Tibial artery (tissue), 4 donors: ENCODE measurements at regions of chr13 and their contacts with region 1.

Region 1: GRCh38 chr13:50911937-50912795 is 2.6 kb downstream of the RNASEH2B start:
- DNase-seq: peak; percentile 85 to 87
- H3K4me3 ChIP-seq: no peak overlapping the region
- H3K27ac ChIP-seq: no peak overlapping the region
- H3K4me1 ChIP-seq: peaks cover 0 to 31% (median 16%) of the 10 kb centered on the region in 4 donors
- H3K27me3 ChIP-seq: no peaks in the 10 kb centered on the region
- CTCF ChIP-seq: peak; percentile 66 to 71

Region 2: DNA sequence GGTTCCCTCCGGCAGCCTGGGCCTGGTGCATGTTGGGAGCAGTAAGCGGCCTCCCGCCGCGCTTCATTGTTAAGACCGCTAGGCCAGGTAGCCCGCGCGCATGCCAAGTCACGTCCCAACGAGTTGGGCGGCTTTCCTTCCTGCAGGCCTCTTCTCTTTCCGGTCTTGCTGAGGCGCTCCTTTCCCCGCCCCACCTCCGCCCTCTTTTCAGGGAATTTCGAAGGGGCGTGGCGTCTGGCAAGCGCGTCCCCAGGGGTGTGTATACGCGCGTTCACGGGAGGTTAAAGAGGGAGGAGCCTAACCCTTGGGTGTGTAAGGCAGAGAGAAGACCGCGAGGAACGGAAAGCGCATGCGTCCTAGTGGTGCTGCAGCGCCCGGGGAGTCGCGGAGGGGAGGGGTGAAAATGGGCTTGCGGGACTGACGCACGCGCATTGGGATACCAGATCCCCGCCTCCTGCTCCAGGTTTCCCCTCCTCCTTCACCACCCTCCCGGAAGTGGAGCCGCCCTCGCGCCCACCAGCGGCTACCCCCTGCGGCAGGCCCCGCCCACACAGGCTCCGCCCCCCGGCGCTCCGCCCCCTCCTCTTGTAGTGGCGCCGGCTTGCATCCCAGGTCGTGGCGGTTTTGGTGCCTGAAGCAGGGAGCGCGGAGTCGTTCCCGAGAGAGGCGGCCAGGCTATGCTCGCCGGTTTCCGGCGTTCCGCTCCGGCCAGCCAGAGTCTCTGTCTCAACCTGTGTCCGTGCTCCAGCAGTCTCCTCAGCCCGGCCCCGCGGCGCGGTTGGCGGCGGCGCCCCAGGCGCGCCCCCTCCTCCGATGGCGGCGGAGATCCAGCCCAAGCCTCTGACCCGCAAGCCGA is 671.9 kb after region 1 on chr13 and contains the start of gene WDFY2:
- intact Hi-C with region 1: loop called (anchors 5 kb)
- DNase-seq: peak; percentile 100
- H3K4me3 ChIP-seq: peak within 1 kb of the TSS; percentile 75 to 97
- H3K27ac ChIP-seq: peak within 1 kb of the TSS; percentile 77 to 88
- H3K4me1 ChIP-seq: peaks cover 0 to 35% (median 20%) of the 10 kb centered on the region in 4 donors
- H3K27me3 ChIP-seq: no peaks in the 10 kb centered on the region
- CTCF ChIP-seq: peak in 1 of 2 experiments; percentile 44